Aorta (tissue), 5 donors: ENCODE measurements at regions of chr20 and their contacts with region 1.

Region 1: GRCh38 chr20:49590979-49591865 is 23.3 kb upstream of the PTGIS start:
- DNase-seq: no peak
- ATAC-seq: peak; percentile 46
- H3K4me3 ChIP-seq: no peak overlapping the region
- H3K27ac ChIP-seq: peak overlapping the region; percentile 73 to 84
- H3K4me1 ChIP-seq: peaks cover 0 to 4% of the 10 kb centered on the region in 2 donors
- H3K27me3 ChIP-seq: no peaks in the 10 kb centered on the region

Region 2: GRCh38 chr20:49559401-49560081 is 31.7 kb before region 1 on chr20:
- intact Hi-C with region 1: loop called in 1 of 2 experiments (anchors 2 kb)
- DNase-seq: no peak
- ATAC-seq: peak; percentile 53
- H3K4me3 ChIP-seq: no peak overlapping the region
- H3K27ac ChIP-seq: peak overlapping the region; percentile 64 to 94
- H3K4me1 ChIP-seq: peaks cover 4% of the 10 kb centered on the region in 2 donors
- H3K27me3 ChIP-seq: no peaks in the 10 kb centered on the region